CD4-positive, alpha-beta memory T cell (primary cell): ENCODE measurements at regions of chr11 and their contacts with region 1.

Region 1: DNA sequence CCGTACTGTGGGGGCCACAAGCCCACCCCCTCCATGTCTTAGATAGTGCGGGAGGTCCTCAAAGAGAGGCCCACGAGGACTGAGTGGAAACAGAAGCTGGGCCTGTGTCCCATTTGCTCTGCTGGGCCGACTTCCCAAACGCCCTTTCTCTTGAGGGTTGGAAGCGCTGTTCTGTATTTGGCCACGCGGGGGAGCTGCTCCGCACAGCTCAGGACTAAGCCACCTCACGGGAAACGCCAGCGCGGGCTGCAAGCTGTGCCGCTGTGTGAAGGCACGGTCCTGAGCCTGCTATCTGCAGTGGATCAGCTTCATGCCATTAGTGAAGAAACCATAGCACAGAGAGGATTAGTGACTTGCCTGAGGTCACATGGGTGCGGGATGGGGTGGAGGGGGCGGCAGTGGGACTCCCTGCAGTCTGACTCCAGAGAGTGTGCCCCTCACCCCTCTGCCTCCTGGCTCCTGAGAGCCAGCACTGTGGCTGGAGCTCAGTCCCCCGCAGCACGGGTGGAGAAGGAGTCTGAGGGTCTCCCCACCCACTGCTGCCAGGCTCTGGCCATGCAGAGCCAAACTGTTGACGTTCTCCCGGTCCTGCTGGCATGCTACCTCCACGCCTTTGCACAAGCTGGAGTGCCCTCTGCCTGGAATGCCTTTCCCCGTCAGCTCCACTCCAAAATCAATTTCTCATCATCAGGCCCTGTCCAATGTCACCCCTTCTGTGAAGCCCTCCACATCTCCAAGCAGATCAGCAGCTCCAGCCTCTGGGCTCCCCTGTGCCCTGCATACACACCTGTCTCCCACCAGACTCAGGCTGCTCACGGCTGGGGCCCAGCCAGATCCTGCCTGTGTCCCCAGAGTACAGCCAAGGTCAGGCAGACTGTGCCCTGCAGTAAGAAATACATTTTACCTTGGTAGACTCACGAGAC is 51.5 kb upstream of the LRRC32 start:
- DNase-seq: peak; percentile 43 to 57 (median 55)
- H3K4me3 ChIP-seq: no peak overlapping the region
- H3K4me3 Mint-ChIP-seq: peak overlapping the region in 7 of 8 donors; percentile 26 to 65 (median 49)
- H3K27ac ChIP-seq: no peak overlapping the region
- H3K27ac Mint-ChIP-seq: no peak overlapping the region
- H3K4me1 ChIP-seq: no peaks in the 10 kb centered on the region
- H3K4me1 Mint-ChIP-seq: peaks cover 5 to 10% (median 6%) of the 10 kb centered on the region in 4 donors
- H3K27me3 ChIP-seq: no peaks in the 10 kb centered on the region
- H3K27me3 Mint-ChIP-seq: peaks cover 6 to 13% of the 10 kb centered on the region in 2 donors

Region 2: GRCh38 chr11:76708946-76709678 is 12.9 kb before region 1 on chr11:
- CTCF ChIA-PET with region 1: interaction called, 10 read pairs
- POLR2A ChIA-PET with region 1: no interaction called
- intact Hi-C with region 1: no loop called
- DNase-seq: no peak
- H3K4me3 ChIP-seq: no peak overlapping the region
- H3K4me3 Mint-ChIP-seq: no peak overlapping the region
- H3K27ac ChIP-seq: no peak overlapping the region
- H3K27ac Mint-ChIP-seq: no peak overlapping the region
- H3K4me1 ChIP-seq: no peaks in the 10 kb centered on the region
- H3K4me1 Mint-ChIP-seq: no peaks in the 10 kb centered on the region
- H3K27me3 ChIP-seq: no peaks in the 10 kb centered on the region
- H3K27me3 Mint-ChIP-seq: peaks cover 1 to 6% of the 10 kb centered on the region in 2 donors

Region 3: DNA sequence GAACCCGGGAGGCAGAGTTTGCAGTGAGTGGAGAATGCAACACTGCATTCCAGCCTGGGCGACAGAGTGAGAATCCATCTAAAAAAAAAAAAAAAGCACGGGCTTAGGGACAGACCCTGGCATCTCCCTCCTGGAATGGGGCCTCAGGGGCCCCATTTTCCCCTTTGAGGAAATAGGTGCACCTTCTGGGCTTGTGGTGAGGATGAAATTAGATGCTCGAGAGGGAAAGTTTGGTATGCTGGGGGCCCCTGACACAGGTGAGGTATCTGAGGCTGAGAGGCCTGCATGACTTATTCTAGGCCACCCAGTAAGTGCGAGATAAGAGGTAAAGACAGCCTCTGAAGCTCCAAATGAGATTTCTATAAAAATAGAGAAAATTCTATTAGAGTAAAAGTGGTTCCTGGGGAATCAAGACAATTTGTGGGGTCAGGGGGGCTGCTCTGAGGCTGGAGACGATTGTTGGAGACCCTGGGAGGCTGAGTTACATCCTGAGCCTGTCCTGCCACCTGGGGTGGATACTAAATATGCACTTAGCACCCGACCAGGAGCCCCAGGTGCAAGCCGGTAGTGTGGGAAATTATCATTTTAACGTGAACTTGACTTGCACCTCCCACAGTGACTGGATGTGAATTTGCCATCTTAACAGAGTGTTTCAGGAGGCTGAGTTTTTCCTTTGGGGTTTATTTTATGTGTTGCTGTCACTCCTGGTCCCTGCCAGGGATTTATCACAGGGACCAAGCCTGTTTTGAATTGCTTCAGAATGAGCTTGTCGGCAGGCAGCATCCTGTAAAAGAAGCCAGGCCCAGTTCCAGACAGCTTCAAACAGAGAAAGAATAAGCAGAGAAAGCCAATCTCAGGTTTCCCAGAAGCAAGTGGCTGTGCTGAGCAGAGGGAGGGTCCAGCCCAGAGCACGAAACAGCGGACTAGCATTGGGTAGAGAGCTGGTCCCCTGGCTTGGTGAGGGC is 12.7 kb after region 1 on chr11:
- CTCF ChIA-PET with region 1: interaction called, 22 read pairs
- POLR2A ChIA-PET with region 1: no interaction called
- intact Hi-C with region 1: no loop called
- DNase-seq: no peak
- H3K4me3 ChIP-seq: no peak overlapping the region
- H3K4me3 Mint-ChIP-seq: no peak overlapping the region
- H3K27ac ChIP-seq: no peak overlapping the region
- H3K27ac Mint-ChIP-seq: no peak overlapping the region
- H3K4me1 ChIP-seq: no peaks in the 10 kb centered on the region
- H3K4me1 Mint-ChIP-seq: no peaks in the 10 kb centered on the region
- H3K27me3 ChIP-seq: no peaks in the 10 kb centered on the region
- H3K27me3 Mint-ChIP-seq: peaks cover 3 to 5% of the 10 kb centered on the region in 2 donors

Region 4: DNA sequence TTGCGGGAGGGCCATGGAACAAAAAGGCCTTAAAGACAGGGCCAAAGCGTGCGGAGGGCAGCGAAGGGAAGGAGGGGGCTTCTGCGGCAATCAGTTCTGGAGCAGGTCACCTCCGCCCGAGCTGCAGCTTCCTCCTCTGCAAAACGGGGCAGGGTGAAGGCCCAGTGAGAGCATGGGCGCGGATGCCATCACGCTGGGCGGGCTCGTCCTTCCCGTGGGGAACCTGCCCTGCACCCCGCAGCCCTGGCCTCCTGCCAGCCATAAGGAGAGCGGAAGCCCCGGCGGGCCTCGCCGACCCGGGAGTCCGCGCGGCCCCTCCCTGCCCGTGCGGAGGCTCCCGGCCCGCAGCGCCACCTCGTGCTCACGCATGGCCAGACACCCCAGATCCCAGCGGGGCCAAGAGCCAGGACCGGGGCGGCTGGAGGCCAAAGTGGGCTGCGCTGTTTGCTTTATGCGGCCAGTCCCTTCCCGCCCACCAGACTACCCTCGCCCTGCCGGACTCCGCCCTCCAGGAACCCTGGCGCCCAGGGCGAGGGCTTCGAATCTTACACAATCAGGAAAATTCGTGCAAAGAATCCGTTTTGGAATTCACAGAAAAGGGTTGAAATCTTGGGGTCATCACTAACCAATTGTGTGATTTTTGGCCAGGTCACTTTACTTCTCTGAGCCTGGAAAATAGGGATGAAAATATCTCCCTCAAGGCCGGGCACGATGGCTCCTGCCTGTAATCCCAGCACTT is 77.2 kb after region 1 on chr11:
- CTCF ChIA-PET with region 1: interaction called, 47 read pairs
- POLR2A ChIA-PET with region 1: interaction called, 3 read pairs
- intact Hi-C with region 1: loop called (anchors 2 kb)
- DNase-seq: peak; percentile 70 to 75 (median 73)
- H3K4me3 ChIP-seq: peak overlapping the region in 1 of 2 donors; percentile 33
- H3K4me3 Mint-ChIP-seq: peak overlapping the region in 7 of 8 donors; percentile 17 to 71 (median 57)
- H3K27ac ChIP-seq: no peak overlapping the region
- H3K27ac Mint-ChIP-seq: peak overlapping the region in 4 of 7 donors; percentile 35 to 64 (median 44)
- H3K4me1 ChIP-seq: peaks cover 14% of the 10 kb centered on the region
- H3K4me1 Mint-ChIP-seq: peaks cover 2 to 22% (median 9%) of the 10 kb centered on the region in 4 donors
- H3K27me3 ChIP-seq: no peaks in the 10 kb centered on the region
- H3K27me3 Mint-ChIP-seq: peaks cover 0 to 8% of the 10 kb centered on the region in 2 donors

Region 5: GRCh38 chr11:76997512-76997911 is 275.5 kb after region 1 on chr11:
- CTCF ChIA-PET with region 1: no interaction called
- POLR2A ChIA-PET with region 1: no interaction called
- intact Hi-C with region 1: no loop called
- DNase-seq: peak in 1 of 5 donors; percentile 1
- H3K4me3 ChIP-seq: no peak overlapping the region
- H3K4me3 Mint-ChIP-seq: no peak overlapping the region
- H3K27ac ChIP-seq: no peak overlapping the region
- H3K27ac Mint-ChIP-seq: no peak overlapping the region
- H3K4me1 ChIP-seq: no peaks in the 10 kb centered on the region
- H3K4me1 Mint-ChIP-seq: peaks cover 0 to 6% (median 1%) of the 10 kb centered on the region in 4 donors
- H3K27me3 ChIP-seq: no peaks in the 10 kb centered on the region
- H3K27me3 Mint-ChIP-seq: no peaks in the 10 kb centered on the region